ENCODE measurements at regions of chr4 and their contacts with region 1.

Region 1: GRCh38 chr4:88456757-88457306 is at the start of gene HERC5:
- DNase-seq: peak; percentile 97
- H3K4me3 ChIP-seq: peak within 1 kb of the TSS in 2 of 3 experiments; percentile 18 to 43
- H3K27ac ChIP-seq: no peak within 1 kb of the TSS
- H3K4me1 ChIP-seq: no peaks in the 10 kb centered on the region
- H3K27me3 ChIP-seq: peaks cover 8 to 28% of the 10 kb centered on the region in 2 experiments
- CTCF ChIP-seq: peak; percentile 52 to 70
- POLR2A ChIP-seq: no peak
- total RNA-seq, gene HERC5: 0.30 and 0.91 TPM in 2 replicates

Region 2: GRCh38 chr4:87657525-87657924 is 799.3 kb before region 1 on chr4:
- CTCF ChIA-PET with region 1: no interaction called
- POLR2A ChIA-PET with region 1: no interaction called
- dilution Hi-C with region 1: no loop called
- intact Hi-C with region 1: loop called (anchors 10 kb)
- DNase-seq: peak; percentile 91
- H3K4me3 ChIP-seq: no peak overlapping the region
- H3K27ac ChIP-seq: peak overlapping the region; percentile 93
- H3K4me1 ChIP-seq: peaks cover 32% of the 10 kb centered on the region
- H3K27me3 ChIP-seq: no peaks in the 10 kb centered on the region
- CTCF ChIP-seq: no peak
- POLR2A ChIP-seq: no peak

Region 3: DNA sequence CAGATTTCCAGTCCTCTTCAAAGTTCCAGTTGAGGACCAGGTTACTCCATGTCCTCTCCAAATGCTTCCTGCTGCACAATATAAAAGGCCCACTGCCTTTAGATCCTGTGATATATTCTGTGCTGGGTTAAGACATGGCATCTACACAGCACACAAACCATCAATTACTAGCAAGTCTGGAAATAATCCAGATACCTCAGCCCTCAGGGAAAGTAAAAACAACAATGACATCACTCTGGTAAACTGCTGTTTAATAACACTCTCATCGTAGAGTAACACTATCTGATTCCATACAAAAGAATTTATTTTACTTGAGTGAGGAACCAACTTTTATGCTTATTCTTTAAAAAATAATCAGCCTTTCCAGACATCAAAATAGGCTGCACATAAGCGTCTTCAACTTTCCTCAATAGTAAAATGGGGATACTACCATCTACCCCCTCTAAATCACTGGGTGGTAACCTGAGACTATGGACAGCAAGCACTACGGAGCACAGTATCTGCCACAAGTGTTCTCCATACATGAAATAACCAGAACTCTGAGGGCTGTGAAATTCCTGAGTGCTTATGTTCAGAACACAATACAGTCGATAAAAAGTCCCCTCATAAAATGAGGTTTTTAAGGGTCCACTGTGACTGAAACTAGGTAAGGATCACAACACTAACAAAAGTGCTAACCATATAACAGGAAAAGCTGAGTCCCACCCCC is 351.8 kb before region 1 on chr4:
- CTCF ChIA-PET with region 1: no interaction called
- POLR2A ChIA-PET with region 1: no interaction called
- dilution Hi-C with region 1: no loop called
- intact Hi-C with region 1: loop called (anchors 5 kb)
- DNase-seq: peak; percentile 87
- H3K4me3 ChIP-seq: peak overlapping the region in 1 of 3 experiments; percentile 27
- H3K27ac ChIP-seq: peak overlapping the region; percentile 93
- H3K4me1 ChIP-seq: peaks cover 37% of the 10 kb centered on the region
- H3K27me3 ChIP-seq: no peaks in the 10 kb centered on the region
- CTCF ChIP-seq: no peak
- POLR2A ChIP-seq: no peak

Region 4: GRCh38 chr4:88225232-88226105 is 231.4 kb before region 1 on chr4:
- CTCF ChIA-PET with region 1: no interaction called
- POLR2A ChIA-PET with region 1: no interaction called
- dilution Hi-C with region 1: no loop called
- intact Hi-C with region 1: loop called (anchors 1 kb)
- DNase-seq: peak; percentile 91
- H3K4me3 ChIP-seq: peak overlapping the region in 1 of 3 experiments; percentile 6
- H3K27ac ChIP-seq: peak overlapping the region; percentile 95
- H3K4me1 ChIP-seq: peaks cover 19% of the 10 kb centered on the region
- H3K27me3 ChIP-seq: no peaks in the 10 kb centered on the region
- CTCF ChIP-seq: no peak
- POLR2A ChIP-seq: no peak

Region 5: GRCh38 chr4:88366460-88366859 is 90.4 kb before region 1 on chr4:
- CTCF ChIA-PET with region 1: interaction called, 3 read pairs
- POLR2A ChIA-PET with region 1: no interaction called
- dilution Hi-C with region 1: no loop called
- intact Hi-C with region 1: loop called (anchors 1 kb)
- DNase-seq: no peak
- H3K4me3 ChIP-seq: no peak overlapping the region
- H3K27ac ChIP-seq: no peak overlapping the region
- H3K4me1 ChIP-seq: no peaks in the 10 kb centered on the region
- H3K27me3 ChIP-seq: peaks cover 0 to 2% of the 10 kb centered on the region in 2 experiments
- CTCF ChIP-seq: no peak
- POLR2A ChIP-seq: no peak

Region 6: GRCh38 chr4:88514557-88515511 is 58.0 kb after region 1 on chr4:
- CTCF ChIA-PET with region 1: interaction called, 31 read pairs
- POLR2A ChIA-PET with region 1: no interaction called
- dilution Hi-C with region 1: no loop called
- intact Hi-C with region 1: loop called (anchors 2 kb)
- DNase-seq: no peak
- H3K4me3 ChIP-seq: no peak overlapping the region
- H3K27ac ChIP-seq: no peak overlapping the region
- H3K4me1 ChIP-seq: peaks cover 10% of the 10 kb centered on the region
- H3K27me3 ChIP-seq: no peaks in the 10 kb centered on the region
- CTCF ChIP-seq: no peak
- POLR2A ChIP-seq: no peak

Region 7: DNA sequence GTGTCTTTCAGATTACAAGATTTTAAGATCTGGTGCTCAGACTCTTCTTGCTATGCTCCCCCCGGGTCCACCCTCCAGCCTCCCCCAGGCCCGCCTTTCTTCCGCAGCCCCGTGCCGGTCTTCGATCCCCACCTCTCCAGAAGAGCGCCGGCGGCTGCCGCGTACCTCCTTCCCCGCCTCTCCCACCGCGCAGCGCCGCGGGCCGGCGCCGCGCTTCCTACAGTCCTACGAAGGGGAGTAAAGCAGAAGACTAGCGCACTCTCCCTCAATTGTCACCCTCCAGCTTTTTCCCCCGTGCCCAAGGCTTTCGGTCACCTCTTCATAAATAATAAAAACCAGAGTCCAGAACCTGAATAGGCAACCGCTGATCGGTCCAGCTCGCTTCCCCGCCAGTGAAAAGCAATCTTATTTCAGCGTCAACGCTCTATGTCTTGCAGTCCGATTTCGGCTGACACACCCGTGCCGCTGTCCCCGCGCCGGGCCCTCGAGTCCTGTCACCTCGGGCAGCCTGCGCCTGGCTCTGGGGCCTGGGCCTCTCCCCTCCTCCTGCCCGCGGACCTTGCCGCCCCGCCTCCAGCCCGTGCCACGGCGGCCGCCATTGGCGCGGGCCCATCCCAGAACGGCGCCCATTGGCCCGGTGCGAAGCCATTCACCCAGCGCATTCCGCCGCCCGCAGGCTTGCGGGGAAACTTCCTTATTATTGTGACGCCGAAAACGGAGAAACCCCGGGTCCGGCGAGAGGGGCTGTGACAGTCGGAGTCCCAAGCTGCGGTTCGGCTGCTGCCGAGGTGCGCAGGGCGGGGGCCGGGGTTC is 135.2 kb after region 1 on chr4 and contains the start of gene HERC3:
- CTCF ChIA-PET with region 1: no interaction called
- POLR2A ChIA-PET with region 1: no interaction called
- dilution Hi-C with region 1: no loop called
- intact Hi-C with region 1: loop called (anchors 10 kb)
- DNase-seq: peak; percentile 93
- H3K4me3 ChIP-seq: peak within 1 kb of the TSS; percentile 60 to 81 (median 80)
- H3K27ac ChIP-seq: peak within 1 kb of the TSS; percentile 56
- H3K4me1 ChIP-seq: peaks cover 9% of the 10 kb centered on the region
- H3K27me3 ChIP-seq: no peaks in the 10 kb centered on the region
- CTCF ChIP-seq: peak in 1 of 2 donors; percentile 12
- POLR2A ChIP-seq: no peak
- total RNA-seq, gene HERC3: 21.2 and 25.6 TPM in 2 replicates

Measured in endothelial cell of umbilical vein (primary cell).